HepG2 (cell line): ENCODE measurements at regions of chr6 and their contacts with region 1.

Region 1: DNA sequence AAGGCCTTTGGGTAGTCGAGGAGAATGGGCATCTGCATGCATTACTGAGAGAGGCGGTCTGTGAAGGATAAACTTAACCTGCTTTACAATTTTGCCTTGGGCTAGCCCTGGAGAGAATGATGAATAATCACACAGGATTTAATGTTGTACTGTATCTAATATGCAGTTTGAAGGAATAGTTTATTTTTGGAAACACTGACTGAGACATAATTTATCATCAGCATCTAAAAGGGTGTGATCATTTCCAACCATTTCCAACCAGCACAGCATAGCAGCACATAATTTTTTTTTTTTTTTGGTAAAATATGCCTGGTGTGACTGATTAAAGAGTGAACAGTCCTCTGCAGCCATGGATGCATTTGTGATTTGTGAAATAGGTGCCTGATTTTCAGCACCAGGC is 519.5 kb downstream of the PHF3 start:
- DNase-seq: no peak
- ATAC-seq: no peak; the same call in 2 of the 3 replicates
- H3K4me3 ChIP-seq: no peak overlapping the region
- H3K27ac ChIP-seq: no peak overlapping the region
- H3K4me1 ChIP-seq: no peaks in the 10 kb centered on the region
- H3K27me3 ChIP-seq: no peaks in the 10 kb centered on the region
- CTCF ChIP-seq: no peak
- EP300 ChIP-seq: no peak
- POLR2A ChIP-seq: no peak
- RAD21 ChIP-seq: no peak

Region 2: DNA sequence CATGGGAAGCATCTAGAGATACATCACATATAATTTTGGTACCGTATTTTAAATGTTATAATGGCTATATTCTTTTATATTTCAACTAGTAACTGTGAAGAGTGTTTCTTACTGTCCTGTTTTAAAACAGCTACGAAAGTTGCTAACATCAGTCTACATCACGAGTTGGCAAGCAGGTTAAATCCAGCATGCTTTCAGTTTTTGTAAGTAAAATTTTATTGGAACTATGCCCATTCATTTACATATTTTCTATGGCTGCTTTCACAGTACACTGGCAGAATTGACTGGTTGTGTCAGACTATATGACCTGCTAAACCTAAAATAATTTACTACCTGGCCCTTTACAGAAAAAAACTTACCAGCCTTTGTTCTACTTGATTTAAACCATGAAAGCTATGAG is 41.4 kb before region 1 on chr6:
- CTCF ChIA-PET with region 1: no interaction called
- POLR2A ChIA-PET with region 1: no interaction called
- in situ Hi-C with region 1: no loop called
- intact Hi-C with region 1: loop called (anchors 1 kb)
- DNase-seq: no peak
- ATAC-seq: no peak
- H3K4me3 ChIP-seq: no peak overlapping the region
- H3K27ac ChIP-seq: no peak overlapping the region
- H3K4me1 ChIP-seq: no peaks in the 10 kb centered on the region
- H3K27me3 ChIP-seq: no peaks in the 10 kb centered on the region; a peak in 2 of 5 replicates
- CTCF ChIP-seq: no peak
- EP300 ChIP-seq: no peak
- POLR2A ChIP-seq: no peak
- RAD21 ChIP-seq: no peak

Region 3: DNA sequence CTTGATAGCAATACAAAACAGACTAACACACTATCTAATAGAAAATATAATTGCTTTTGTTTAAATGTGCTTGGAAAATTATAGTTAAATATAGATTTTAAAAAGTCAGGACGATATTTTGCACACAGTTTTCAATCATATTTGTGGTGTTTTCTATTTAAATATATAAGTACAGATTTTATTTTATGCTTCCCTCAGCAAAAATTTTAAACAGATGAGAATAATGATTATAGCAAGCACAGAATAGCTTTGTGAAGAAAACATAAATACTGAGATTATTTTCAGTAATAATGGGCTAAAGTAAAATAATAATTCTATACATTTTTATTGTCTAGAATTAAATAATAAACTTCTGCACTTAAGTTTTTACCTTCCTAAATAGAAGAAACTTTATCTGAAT is 290.0 kb after region 1 on chr6:
- CTCF ChIA-PET with region 1: no interaction called
- POLR2A ChIA-PET with region 1: no interaction called
- in situ Hi-C with region 1: no loop called
- intact Hi-C with region 1: no loop called
- DNase-seq: no peak
- ATAC-seq: no peak
- H3K4me3 ChIP-seq: no peak overlapping the region
- H3K27ac ChIP-seq: no peak overlapping the region
- H3K4me1 ChIP-seq: no peaks in the 10 kb centered on the region
- H3K27me3 ChIP-seq: no peaks in the 10 kb centered on the region
- CTCF ChIP-seq: no peak
- EP300 ChIP-seq: no peak
- POLR2A ChIP-seq: no peak
- RAD21 ChIP-seq: no peak